Activated CD4-positive, alpha-beta T cell treated with anti-CD3 and anti-CD28 coated beads, Interleukin-2, amount 10 ng/mL, durations not matched to agents 24 days and 14 days (primary cell): ENCODE measurements at regions of chr12 and their contacts with region 1.

Region 1: GRCh38 chr12:22443379-22444316 is 100.7 kb downstream of the C2CD5 start:
- DNase-seq: peak; percentile 86
- H3K4me3 Mint-ChIP-seq: no peak overlapping the region
- H3K27ac Mint-ChIP-seq: no peak overlapping the region
- H3K4me1 Mint-ChIP-seq: peaks cover 10% of the 10 kb centered on the region
- H3K27me3 Mint-ChIP-seq: peaks cover 16% of the 10 kb centered on the region

Region 2: DNA sequence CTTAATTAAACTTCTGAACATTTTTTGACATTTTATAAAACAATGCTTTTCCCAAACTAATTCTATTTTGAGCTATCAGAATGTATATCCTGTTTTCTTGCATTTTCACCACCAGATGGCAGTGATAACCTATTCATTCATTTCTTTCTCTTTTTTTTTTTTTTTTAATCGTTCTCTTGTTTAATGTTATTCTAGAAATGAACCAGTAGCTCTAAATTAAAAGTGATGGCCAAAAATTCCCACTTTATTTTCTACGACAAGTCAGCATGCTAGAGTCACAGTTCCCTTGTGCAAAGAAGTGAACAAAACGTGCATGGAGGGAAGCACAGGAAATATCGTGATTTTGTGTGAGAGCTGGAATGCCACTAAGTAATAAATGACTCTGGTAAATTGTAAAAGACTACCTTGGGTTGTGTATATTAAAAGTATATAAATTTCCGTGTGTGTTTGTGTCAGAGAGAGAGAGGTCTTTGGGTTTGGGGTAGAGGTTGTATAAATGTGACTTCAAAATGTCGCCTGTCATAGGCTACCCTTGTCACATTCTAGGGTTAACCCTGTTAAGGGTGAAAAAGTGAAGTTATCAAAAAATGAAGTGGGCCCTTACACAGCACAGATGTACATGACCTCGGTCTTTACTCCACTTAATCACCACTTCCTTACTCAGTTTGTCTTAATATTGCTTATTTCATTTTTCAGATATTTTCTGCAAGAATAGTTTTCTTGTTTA is 745.6 kb before region 1 on chr12:
- intact Hi-C with region 1: loop called (anchors 1 kb)
- DNase-seq: no peak
- H3K4me3 Mint-ChIP-seq: no peak overlapping the region
- H3K27ac Mint-ChIP-seq: no peak overlapping the region
- H3K4me1 Mint-ChIP-seq: no peaks in the 10 kb centered on the region
- H3K27me3 Mint-ChIP-seq: peaks cover 10% of the 10 kb centered on the region

Region 3: DNA sequence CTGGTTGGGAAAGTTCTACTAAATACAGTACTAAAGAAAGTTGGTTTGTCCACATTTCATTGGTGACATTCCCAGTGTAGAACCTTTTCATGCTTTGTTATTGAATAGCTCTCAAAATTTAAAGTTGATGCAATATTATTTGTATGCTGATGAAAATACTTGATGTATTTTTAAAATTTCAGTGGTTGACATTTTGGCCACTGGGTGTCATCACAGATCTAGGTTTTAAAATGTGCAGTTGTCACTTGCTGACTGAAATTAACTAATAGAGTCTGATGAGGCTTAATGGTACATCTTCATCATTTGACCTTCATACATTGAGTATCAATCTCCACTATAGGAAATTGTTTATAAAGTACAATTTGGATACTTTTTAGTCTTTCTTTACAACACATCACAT is 360.5 kb before region 1 on chr12:
- intact Hi-C with region 1: loop called (anchors 1 kb)
- DNase-seq: peak; percentile 66
- H3K4me3 Mint-ChIP-seq: no peak overlapping the region
- H3K27ac Mint-ChIP-seq: no peak overlapping the region
- H3K4me1 Mint-ChIP-seq: no peaks in the 10 kb centered on the region
- H3K27me3 Mint-ChIP-seq: peaks cover 3% of the 10 kb centered on the region

Region 4: DNA sequence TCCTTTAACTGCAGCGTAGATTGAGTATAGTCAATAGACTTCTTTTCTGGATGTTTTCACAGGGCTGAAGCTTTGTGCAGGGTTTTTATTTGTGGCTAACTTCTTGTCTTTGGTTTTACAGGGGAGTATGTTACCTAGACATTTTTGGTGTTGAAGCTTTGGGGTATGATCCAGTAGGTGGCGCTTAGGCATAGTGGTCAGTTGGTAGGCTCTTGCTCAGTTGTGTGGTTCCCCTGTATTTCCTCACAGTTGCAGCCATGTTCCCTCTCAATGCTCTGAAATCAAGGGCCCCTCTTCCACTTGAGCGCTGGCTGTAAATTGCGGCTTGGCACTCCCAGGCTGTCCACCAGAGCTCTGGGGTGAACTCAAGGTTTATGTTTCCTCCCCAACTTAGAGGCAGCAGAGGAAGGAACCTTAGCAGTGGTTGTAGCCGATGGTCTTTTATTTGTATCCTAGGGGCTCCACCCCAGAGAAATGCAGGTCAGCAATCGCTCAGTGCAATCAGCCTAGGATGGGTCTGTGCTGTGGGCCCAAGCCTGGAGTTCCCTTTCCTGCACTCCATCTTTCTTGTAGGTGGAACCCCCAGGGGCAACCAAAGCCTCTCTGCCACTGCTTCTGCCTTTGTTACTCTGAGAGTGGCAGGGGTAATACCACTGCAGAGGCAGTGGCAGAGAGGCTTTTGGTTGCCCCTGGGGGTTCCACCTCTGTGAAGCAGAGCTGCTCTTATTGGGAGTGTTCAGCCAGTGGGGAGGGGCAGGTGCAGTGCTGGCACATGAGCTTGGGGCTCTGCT is 342.5 kb before region 1 on chr12:
- intact Hi-C with region 1: loop called (anchors 1 kb)
- DNase-seq: peak; percentile 80
- H3K4me3 Mint-ChIP-seq: no peak overlapping the region
- H3K27ac Mint-ChIP-seq: no peak overlapping the region
- H3K4me1 Mint-ChIP-seq: peaks cover 4% of the 10 kb centered on the region
- H3K27me3 Mint-ChIP-seq: peaks cover 20% of the 10 kb centered on the region

Region 5: GRCh38 chr12:22334410-22335290 is 109.0 kb before region 1 on chr12 and contains the start of gene ST8SIA1:
- intact Hi-C with region 1: loop called (anchors 2 kb)
- DNase-seq: peak; percentile 75
- H3K4me3 Mint-ChIP-seq: peak within 1 kb of the TSS; percentile 90
- H3K27ac Mint-ChIP-seq: peak within 1 kb of the TSS; percentile 49
- H3K4me1 Mint-ChIP-seq: peaks cover 22% of the 10 kb centered on the region
- H3K27me3 Mint-ChIP-seq: peaks cover 62% of the 10 kb centered on the region
- total RNA-seq, gene ST8SIA1: 0.21 and 0.28 TPM in 2 replicates

Region 6: GRCh38 chr12:22396253-22396652 is 47.4 kb before region 1 on chr12:
- intact Hi-C with region 1: loop called (anchors 5 kb)
- DNase-seq: no peak
- H3K4me3 Mint-ChIP-seq: no peak overlapping the region
- H3K27ac Mint-ChIP-seq: peak overlapping the region; percentile 49
- H3K4me1 Mint-ChIP-seq: peaks cover 17% of the 10 kb centered on the region
- H3K27me3 Mint-ChIP-seq: no peaks in the 10 kb centered on the region

Region 7: DNA sequence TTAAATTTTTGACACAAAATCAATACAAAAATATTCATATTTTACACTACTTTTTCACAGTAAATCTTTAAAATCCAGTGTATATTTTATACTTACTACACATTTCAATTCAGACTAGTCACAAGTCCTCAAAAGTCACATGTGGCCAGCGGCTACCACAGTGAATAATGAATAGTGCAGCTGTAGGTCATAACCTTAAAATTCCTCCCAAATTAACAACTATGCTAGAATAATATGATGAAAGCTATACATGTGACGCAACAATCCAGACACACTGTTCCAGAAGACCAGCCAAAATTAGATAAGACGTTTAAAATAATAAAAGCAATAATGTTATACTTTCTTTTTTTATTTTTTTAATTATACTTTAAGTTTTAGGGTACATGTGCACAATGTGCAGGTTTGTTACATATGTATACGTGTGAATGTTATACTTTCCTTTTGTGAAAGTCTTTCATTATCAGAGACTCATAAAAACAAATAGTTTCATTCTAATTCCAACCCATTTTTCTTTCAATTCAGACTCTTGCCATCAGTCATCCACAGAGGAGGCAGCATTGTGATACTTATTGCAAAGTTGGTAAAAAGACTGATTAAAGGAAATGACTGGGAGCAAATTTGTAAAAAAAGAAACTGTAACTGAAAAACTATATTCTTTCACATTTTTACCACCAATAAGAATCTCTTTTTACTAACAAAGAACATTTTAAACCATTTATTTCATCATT is 33.7 kb after region 1 on chr12:
- intact Hi-C with region 1: no loop called
- DNase-seq: no peak
- H3K4me3 Mint-ChIP-seq: no peak overlapping the region
- H3K27ac Mint-ChIP-seq: peak overlapping the region; percentile 26
- H3K4me1 Mint-ChIP-seq: peaks cover 12% of the 10 kb centered on the region
- H3K27me3 Mint-ChIP-seq: no peaks in the 10 kb centered on the region

Region 8: DNA sequence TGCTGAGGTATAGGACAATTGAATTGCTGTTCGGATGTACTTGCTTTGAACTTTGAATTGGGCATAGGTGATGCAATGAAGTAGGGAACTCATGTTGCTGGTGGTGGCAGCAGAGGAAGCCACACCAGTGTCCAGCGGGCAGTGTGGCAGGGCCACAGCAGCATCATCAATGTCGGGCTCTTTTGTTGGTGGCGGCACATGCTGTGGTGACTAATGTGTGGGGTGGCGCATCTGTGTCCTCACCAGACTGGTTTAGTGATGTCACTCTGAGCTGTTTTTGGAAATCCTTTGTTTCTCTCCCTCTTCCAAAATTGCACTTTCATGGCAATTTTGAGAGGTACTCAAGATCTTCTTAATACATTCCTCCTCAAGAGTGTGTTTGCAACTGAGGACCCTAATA is 368.9 kb after region 1 on chr12:
- intact Hi-C with region 1: no loop called
- DNase-seq: no peak
- H3K4me3 Mint-ChIP-seq: no peak overlapping the region
- H3K27ac Mint-ChIP-seq: no peak overlapping the region
- H3K4me1 Mint-ChIP-seq: no peaks in the 10 kb centered on the region
- H3K27me3 Mint-ChIP-seq: no peaks in the 10 kb centered on the region